ENCODE measurements at regions of chr3 and their contacts with region 1.

Region 1: GRCh38 chr3:159828542-159828943 is 160.1 kb upstream of the IL12A start:
- DNase-seq: no peak
- ATAC-seq: peak; percentile 41 to 74 (median 52)
- H3K4me3 ChIP-seq: no peak overlapping the region
- H3K27ac ChIP-seq: peak overlapping the region in 6 of 12 donors; percentile 3 to 52 (median 32)
- H3K4me1 ChIP-seq: peaks cover 4 to 61% (median 32%) of the 10 kb centered on the region in 12 donors
- H3K27me3 ChIP-seq: no peaks in the 10 kb centered on the region
- CTCF ChIP-seq: peak; percentile 44 to 74 (median 60)
- POLR2A ChIP-seq: no peak

Region 2: GRCh38 chr3:159711560-159712333 is 116.8 kb before region 1 on chr3:
- intact Hi-C with region 1: no loop called
- DNase-seq: peak in 4 of 5 donors; percentile 52 to 76 (median 60)
- ATAC-seq: peak; percentile 88 to 99 (median 98)
- H3K4me3 ChIP-seq: no peak overlapping the region
- H3K27ac ChIP-seq: peak overlapping the region; percentile 18 to 72 (median 52)
- H3K4me1 ChIP-seq: peaks cover 0 to 14% (median 7%) of the 10 kb centered on the region in 12 donors
- H3K27me3 ChIP-seq: no peaks in the 10 kb centered on the region
- CTCF ChIP-seq: no peak
- POLR2A ChIP-seq: no peak

Region 3: GRCh38 chr3:159884661-159885402 is 56.3 kb after region 1 on chr3:
- intact Hi-C with region 1: loop called in 9 of 10 experiments (anchors 2 to 10 kb)
- DNase-seq: no peak
- ATAC-seq: no peak
- H3K4me3 ChIP-seq: no peak overlapping the region
- H3K27ac ChIP-seq: peak overlapping the region in 6 of 12 donors; percentile 11 to 44 (median 34)
- H3K4me1 ChIP-seq: peaks cover 7 to 84% (median 62%) of the 10 kb centered on the region in 12 donors
- H3K27me3 ChIP-seq: no peaks in the 10 kb centered on the region
- CTCF ChIP-seq: peak; percentile 42 to 73 (median 62)
- POLR2A ChIP-seq: no peak

Region 4: GRCh38 chr3:159892171-159892795 is 63.7 kb after region 1 on chr3:
- intact Hi-C with region 1: loop called in 2 of 10 experiments (anchors 5 to 10 kb)
- DNase-seq: peak in 4 of 5 donors; percentile 43 to 62 (median 51)
- ATAC-seq: peak; percentile 60 to 81 (median 78)
- H3K4me3 ChIP-seq: no peak overlapping the region
- H3K27ac ChIP-seq: peak overlapping the region; percentile 5 to 59 (median 48)
- H3K4me1 ChIP-seq: peaks cover 0 to 75% (median 50%) of the 10 kb centered on the region in 12 donors
- H3K27me3 ChIP-seq: no peaks in the 10 kb centered on the region
- CTCF ChIP-seq: no peak
- POLR2A ChIP-seq: no peak